Calu3 (cell line): ENCODE measurements at regions of chr1 and their contacts with region 1.

Region 1: DNA sequence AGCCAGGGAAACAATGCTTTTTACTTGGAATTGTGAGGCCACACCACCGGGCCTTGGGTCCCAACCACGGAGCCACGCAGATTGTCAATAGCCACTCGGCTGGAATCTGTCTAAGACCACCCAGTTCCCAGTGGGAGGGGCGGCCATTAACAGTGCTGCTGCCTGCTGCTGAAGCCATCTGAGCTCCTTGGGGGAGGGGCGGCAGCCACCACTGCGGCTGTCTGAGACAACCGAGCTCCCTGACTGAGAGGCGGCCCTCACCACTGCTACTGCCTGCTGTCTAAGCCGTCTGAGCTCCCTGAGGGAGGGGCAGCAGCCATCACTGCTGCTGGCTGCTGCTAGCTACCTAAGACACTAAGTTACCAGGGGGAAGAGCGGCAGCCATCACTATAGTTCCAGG is 64.3 kb downstream of the DMRTA2 start:
- DNase-seq: no peak
- H3K4me3 Mint-ChIP-seq: no peak overlapping the region
- H3K27ac Mint-ChIP-seq: no peak overlapping the region
- H3K4me1 Mint-ChIP-seq: no peaks in the 10 kb centered on the region
- H3K27me3 Mint-ChIP-seq: peaks cover 92% of the 10 kb centered on the region
- CTCF ChIP-seq: no peak

Region 2: DNA sequence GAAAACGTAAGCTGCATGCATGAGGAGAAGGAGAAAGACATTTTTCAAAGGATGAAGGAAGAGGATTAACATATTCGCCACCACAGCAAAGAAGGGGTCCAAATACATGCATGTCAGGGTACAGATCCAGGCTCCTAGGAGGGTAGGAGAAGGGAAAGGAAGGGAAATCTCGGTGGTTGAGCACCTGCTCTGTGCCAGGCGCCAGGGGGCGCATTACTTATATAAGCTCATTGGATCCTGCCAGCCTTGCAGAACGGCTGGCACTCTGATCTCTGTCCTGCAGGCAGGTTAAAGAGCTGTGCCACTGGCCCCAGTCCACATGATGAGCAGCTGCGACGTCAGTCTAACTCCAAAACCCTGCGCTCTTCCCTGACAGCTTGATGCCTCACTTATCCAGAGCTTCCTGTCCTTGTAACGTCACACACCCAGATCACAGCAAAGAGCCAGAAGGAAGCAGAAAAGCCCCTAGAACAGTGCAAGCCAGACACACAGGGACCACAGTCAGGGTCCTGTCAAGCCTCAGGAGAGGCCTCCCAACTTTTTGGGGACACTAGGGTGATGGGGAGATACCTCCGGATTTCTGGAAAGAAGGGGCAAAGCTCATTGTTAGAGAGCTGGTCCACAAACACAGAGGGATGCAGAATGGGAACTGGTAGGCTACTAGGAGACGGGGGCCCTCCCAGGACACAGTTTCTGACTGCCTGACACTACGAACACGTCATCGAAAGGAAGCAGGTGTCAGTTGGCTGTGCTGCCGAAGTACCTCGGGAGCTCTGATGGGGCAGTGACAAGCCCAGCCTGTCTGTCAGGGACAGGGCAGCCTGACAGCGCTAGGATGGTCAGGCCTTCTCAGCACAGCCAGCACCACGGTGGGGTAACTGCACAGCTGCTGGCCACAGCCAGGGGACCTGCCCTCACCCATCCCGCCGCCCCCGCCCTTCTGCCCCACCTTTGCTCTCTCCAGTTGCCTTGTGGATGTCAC is 1681.4 kb before region 1 on chr1:
- CTCF ChIA-PET with region 1: no interaction called
- intact Hi-C with region 1: loop called (anchors 10 kb)
- DNase-seq: peak; percentile 80
- H3K4me3 Mint-ChIP-seq: no peak overlapping the region
- H3K27ac Mint-ChIP-seq: no peak overlapping the region
- H3K4me1 Mint-ChIP-seq: peaks cover 23% of the 10 kb centered on the region
- H3K27me3 Mint-ChIP-seq: no peaks in the 10 kb centered on the region
- CTCF ChIP-seq: peak; percentile 80